Activated CD8-positive, alpha-beta T cell treated with anti-CD3 and anti-CD28 coated beads for 36 hours (primary cell): ENCODE measurements at regions of chr5 and their contacts with region 1.

Region 1: GRCh38 chr5:108381954-108382783 is at the start of gene FBXL17:
- DNase-seq: peak; percentile 96
- ATAC-seq: peak; percentile 81
- H3K4me3 Mint-ChIP-seq: peak within 1 kb of the TSS; percentile 79
- H3K27ac Mint-ChIP-seq: peak within 1 kb of the TSS; percentile 91
- H3K4me1 Mint-ChIP-seq: peaks cover 32% of the 10 kb centered on the region
- H3K27me3 Mint-ChIP-seq: no peaks in the 10 kb centered on the region
- CTCF ChIP-seq: no peak
- total RNA-seq, gene FBXL17: 3.0 to 5.3 TPM

Region 2: GRCh38 chr5:109409844-109410388 is 1027.7 kb after region 1 on chr5 and contains the start of gene PJA2:
- CTCF ChIA-PET with region 1: no interaction called
- POLR2A ChIA-PET with region 1: interaction called, 5 read pairs
- intact Hi-C with region 1: loop called (anchors 5 kb)
- DNase-seq: peak; percentile 99
- ATAC-seq: peak; percentile 85
- H3K4me3 Mint-ChIP-seq: peak within 1 kb of the TSS; percentile 90
- H3K27ac Mint-ChIP-seq: peak within 1 kb of the TSS; percentile 99
- H3K4me1 Mint-ChIP-seq: peaks cover 46% of the 10 kb centered on the region
- H3K27me3 Mint-ChIP-seq: no peaks in the 10 kb centered on the region
- CTCF ChIP-seq: no peak
- total RNA-seq, gene PJA2: 65.2 to 67.4 TPM